ENCODE measurements at regions of chr11 and their contacts with region 1.

Region 1: DNA sequence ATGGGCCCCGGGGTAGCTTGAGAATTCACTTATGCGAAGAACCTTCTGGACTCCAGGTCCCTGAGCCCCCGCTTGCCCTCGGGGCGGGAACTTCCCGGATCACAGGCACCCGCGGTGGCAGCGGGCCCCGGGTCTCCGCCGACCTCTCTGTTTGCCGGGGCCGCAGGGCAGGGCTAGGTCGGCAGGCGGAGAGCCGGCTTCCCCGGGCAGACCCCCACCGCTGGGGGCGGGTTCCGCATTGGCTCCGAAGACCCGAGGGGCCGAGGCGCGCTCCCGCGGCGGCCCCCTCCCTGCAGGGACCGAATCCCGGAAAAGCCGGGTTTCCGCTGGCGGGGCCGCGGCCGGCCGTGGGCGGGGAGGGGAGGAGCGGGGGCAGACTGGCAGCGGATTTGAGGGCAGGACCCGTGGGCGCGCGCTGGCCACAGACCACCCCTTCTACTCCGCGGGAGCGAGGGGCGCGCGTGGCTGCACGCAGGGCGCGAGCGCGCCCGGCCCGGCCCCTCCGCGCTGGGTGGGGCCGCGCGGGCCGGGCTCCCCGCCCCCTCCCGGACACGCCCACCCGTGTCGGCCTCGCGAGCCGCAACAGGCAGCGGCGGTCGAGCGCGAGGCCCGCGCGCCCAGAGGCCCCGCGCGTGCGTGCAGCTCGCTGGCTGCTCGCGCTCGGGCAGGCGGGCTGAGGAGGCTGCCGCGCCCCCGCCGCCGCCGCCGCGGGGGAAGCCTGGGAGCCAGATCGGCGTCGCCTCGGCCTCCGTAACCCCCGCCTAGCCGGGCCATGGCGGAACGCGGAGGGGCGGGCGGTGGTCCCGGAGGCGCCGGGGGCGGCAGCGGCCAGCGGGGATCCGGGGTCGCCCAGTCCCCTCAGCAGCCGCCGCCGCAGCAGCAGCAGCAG is at the start of gene PACS1:
- DNase-seq: peak; percentile 91 to 96 (median 95)
- ATAC-seq: peak; percentile 90 to 91
- H3K4me3 ChIP-seq: peak within 1 kb of the TSS; percentile 98
- H3K27ac ChIP-seq: peak within 1 kb of the TSS; percentile 93
- H3K4me1 ChIP-seq: peaks cover 6% of the 10 kb centered on the region
- H3K27me3 ChIP-seq: no peaks in the 10 kb centered on the region
- total RNA-seq, gene PACS1: 48.3 to 82.5 (median 56.5) TPM

Region 2: GRCh38 chr11:66022401-66023185 is 47.4 kb before region 1 on chr11:
- intact Hi-C with region 1: no loop called
- DNase-seq: peak; percentile 73 to 91 (median 90)
- ATAC-seq: peak; percentile 77 to 84
- H3K4me3 ChIP-seq: no peak overlapping the region
- H3K27ac ChIP-seq: no peak overlapping the region
- H3K4me1 ChIP-seq: no peaks in the 10 kb centered on the region
- H3K27me3 ChIP-seq: no peaks in the 10 kb centered on the region

Region 3: GRCh38 chr11:66126808-66127555 is 57.0 kb after region 1 on chr11:
- intact Hi-C with region 1: loop called in 2 of 4 experiments (anchors 5 to 10 kb)
- DNase-seq: peak; percentile 59 to 80 (median 73)
- ATAC-seq: peak; percentile 95 to 96
- H3K4me3 ChIP-seq: no peak overlapping the region
- H3K27ac ChIP-seq: peak overlapping the region; percentile 76
- H3K4me1 ChIP-seq: peaks cover 4% of the 10 kb centered on the region
- H3K27me3 ChIP-seq: no peaks in the 10 kb centered on the region

Measured in right cardiac atrium (tissue), 5 donors.